GM10248 (cell line): ENCODE measurements at regions of chr1 and their contacts with region 1.

Region 1: DNA sequence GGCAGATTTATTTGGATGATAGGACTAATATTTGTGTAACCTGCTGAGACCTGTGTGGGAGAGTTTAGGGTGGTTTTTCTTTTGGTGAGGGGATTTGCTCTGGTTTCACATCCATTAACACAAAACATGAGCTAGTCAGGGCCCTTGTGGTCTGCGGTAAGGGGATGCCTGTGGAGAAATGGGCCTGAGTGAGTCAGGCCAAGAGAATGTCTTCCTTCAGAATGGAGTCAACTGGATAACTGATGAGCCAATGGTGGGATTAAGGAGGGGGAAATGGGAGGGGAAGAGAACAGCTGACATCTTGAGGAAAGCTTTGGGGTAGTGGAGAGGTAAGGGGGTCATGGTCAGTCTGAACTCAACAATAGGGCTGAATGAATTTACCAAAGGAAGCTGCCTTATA is 13.9 kb downstream of the WNT2B start:
- DNase-seq: no peak
- CTCF ChIP-seq: no peak

Region 2: GRCh38 chr1:112540226-112540794 is 17.7 kb after region 1 on chr1:
- CTCF ChIA-PET with region 1: interaction called, 20 read pairs
- POLR2A ChIA-PET with region 1: no interaction called
- DNase-seq: no peak
- CTCF ChIP-seq: no peak